ENCODE measurements at regions of chr3 and their contacts with region 1.

Region 1: DNA sequence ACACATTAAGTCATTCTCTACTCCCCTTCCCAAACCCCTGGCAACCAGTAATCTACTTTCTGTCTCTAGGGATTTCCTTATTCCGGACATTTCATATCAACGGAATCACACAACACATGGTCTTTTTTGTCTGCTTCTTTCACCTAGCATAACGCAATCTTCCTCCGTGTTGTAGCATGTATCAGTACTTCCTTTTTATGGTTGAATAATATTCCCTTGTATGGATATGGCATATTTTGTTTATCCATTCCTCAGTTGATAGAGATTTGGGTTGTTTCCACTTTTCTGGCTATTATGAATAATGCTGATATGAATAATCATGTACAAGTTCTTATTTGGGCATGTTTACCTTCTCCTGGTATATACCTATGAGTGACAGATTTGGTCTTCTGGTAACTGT is 63.1 kb downstream of the TRANK1 start:
- DNase-seq: no peak
- H3K4me3 ChIP-seq: no peak overlapping the region
- H3K27ac ChIP-seq: no peak overlapping the region
- H3K4me1 ChIP-seq: no peaks in the 10 kb centered on the region
- H3K27me3 ChIP-seq: no peaks in the 10 kb centered on the region
- CTCF ChIP-seq: no peak
- EP300 ChIP-seq: no peak
- POLR2A ChIP-seq: no peak

Region 2: GRCh38 chr3:36579746-36580145 is 302.0 kb before region 1 on chr3:
- in situ Hi-C with region 1: no loop called
- intact Hi-C with region 1: no loop called
- DNase-seq: no peak
- H3K4me3 ChIP-seq: no peak overlapping the region
- H3K27ac ChIP-seq: no peak overlapping the region
- H3K4me1 ChIP-seq: no peaks in the 10 kb centered on the region
- H3K27me3 ChIP-seq: no peaks in the 10 kb centered on the region
- CTCF ChIP-seq: no peak
- EP300 ChIP-seq: no peak
- POLR2A ChIP-seq: no peak

Region 3: DNA sequence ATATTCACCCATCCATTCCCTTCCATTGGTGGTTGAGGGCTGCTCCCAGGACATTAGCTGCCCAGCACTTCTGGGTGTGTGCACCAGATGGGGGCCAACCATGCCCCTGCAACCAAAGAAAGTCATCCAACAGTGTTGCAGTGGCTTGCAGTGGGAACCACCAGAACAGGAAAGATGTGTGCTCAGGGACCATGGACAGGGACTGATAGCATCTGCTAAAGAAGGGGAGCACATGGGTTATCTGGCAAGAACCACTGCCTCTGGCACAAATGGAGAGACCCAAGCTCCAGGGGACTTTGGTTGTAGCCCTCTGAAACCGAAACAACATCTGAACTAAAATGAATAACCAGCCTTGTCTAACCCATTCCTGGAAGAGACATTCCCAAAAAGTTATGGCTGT is 125.5 kb before region 1 on chr3:
- in situ Hi-C with region 1: no loop called
- intact Hi-C with region 1: no loop called
- DNase-seq: no peak
- H3K4me3 ChIP-seq: no peak overlapping the region
- H3K27ac ChIP-seq: no peak overlapping the region
- H3K4me1 ChIP-seq: no peaks in the 10 kb centered on the region
- H3K27me3 ChIP-seq: peaks cover 24% of the 10 kb centered on the region
- CTCF ChIP-seq: no peak
- EP300 ChIP-seq: no peak
- POLR2A ChIP-seq: no peak

Region 4: DNA sequence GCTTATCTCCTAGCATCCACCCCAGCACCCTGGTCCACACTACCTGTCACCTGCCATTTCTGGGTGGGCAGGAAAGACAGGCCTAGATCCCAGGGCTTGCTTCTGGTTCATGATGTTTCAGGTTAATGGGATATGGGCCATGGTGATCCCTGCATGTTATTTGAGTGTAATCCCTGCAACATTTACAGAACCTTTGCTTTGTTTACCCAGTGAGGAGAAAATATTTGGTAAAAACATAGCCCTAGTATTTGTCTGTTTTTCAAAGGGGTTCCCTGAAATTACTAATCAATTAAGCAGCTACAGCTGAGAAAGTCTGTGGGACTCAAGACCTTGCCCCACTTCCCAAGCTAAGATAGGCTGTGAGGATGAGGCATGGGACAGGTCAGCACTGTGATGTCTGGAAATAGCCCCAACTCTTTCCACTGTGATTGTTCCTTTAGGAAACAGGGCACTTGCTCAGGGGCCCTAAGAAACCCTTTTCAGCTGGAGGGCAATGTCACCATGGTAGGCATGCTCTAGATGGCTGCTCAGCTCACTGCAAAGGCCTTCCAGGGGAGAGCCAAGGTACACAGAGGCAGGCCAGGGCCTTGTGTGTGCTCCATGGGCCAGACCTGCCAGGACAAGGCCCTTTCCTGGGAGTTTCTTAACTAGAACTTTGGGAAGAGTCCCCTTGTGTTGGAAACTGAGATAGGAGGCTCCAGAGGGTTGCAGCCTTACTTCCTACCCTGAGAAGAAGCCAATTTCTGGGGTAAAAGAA is 52.0 kb after region 1 on chr3:
- in situ Hi-C with region 1: no loop called
- intact Hi-C with region 1: loop called (anchors 2 kb)
- DNase-seq: no peak
- H3K4me3 ChIP-seq: no peak overlapping the region
- H3K27ac ChIP-seq: no peak overlapping the region
- H3K4me1 ChIP-seq: peaks cover 0 to 5% (median 2%) of the 10 kb centered on the region in 4 donors
- H3K27me3 ChIP-seq: no peaks in the 10 kb centered on the region
- CTCF ChIP-seq: no peak
- EP300 ChIP-seq: no peak
- POLR2A ChIP-seq: no peak